Heart right ventricle (tissue), 16 donors: ENCODE measurements at regions of chr4 and their contacts with region 1.

Region 1: GRCh38 chr4:187814737-187815465 is 180.7 kb upstream of the ZFP42 start:
- DNase-seq: peak in 1 of 2 donors; percentile 7
- ATAC-seq: no peak
- H3K4me3 ChIP-seq: peak overlapping the region in 7 of 10 donors; percentile 2 to 44 (median 33)
- H3K27ac ChIP-seq: no peak overlapping the region
- H3K4me1 ChIP-seq: no peaks in the 10 kb centered on the region
- H3K27me3 ChIP-seq: no peaks in the 10 kb centered on the region
- CTCF ChIP-seq: no peak

Region 2: GRCh38 chr4:189763583-189763982 is 1948.7 kb after region 1 on chr4:
- intact Hi-C with region 1: loop called in 1 of 10 experiments (anchors 5 kb)
- DNase-seq: no peak
- ATAC-seq: no peak
- H3K4me3 ChIP-seq: no peak overlapping the region
- H3K27ac ChIP-seq: no peak overlapping the region
- H3K4me1 ChIP-seq: no peaks in the 10 kb centered on the region
- H3K27me3 ChIP-seq: no peaks in the 10 kb centered on the region
- CTCF ChIP-seq: no peak